Activated CD8-positive, alpha-beta T cell treated with anti-CD3 and anti-CD28 coated beads, Interleukin-2, amount 10 ng/mL, durations not matched to agents 7 days and 5 days (primary cell): ENCODE measurements at regions of chrX and their contacts with region 1.

Region 1: GRCh38 chrX:154373340-154374306 is 811 bp downstream of the FLNA start:
- DNase-seq: no peak
- ATAC-seq: no peak
- H3K4me3 Mint-ChIP-seq: peak overlapping the region; percentile 72
- H3K27ac Mint-ChIP-seq: peak overlapping the region; percentile 72
- H3K4me1 Mint-ChIP-seq: peaks cover 31% of the 10 kb centered on the region
- H3K27me3 Mint-ChIP-seq: no peaks in the 10 kb centered on the region

Region 2: DNA sequence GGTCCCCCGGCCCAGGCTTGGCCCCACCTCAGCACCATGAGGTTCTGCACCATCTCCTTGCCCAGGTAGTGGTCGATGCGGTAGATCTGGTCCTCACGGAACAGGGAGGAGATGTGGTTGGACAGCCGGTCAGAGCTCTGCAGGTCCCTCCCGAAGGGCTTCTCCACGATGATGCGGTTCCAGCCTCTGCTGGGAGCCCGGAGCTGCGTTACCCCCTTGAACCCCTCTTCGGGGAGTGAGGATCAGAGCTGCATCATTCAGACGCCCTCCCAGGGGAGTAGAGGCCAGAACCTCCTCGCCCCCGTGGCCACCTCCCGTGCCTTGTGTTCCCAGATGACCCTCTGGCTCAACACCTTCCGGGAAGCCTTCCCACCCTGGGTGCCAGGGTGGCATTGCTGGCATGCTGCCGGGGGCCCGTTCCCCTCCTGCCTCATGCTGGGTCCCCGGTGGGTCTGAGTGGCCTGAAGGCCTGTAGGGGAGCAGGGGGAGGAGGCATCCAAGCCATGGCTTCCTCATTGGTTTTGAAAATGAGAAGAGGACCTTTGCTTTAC is 160.8 kb after region 1 on chrX:
- CTCF ChIA-PET with region 1: interaction called, 10 read pairs
- POLR2A ChIA-PET with region 1: interaction called, 3 read pairs
- DNase-seq: no peak
- ATAC-seq: no peak
- H3K4me3 Mint-ChIP-seq: no peak overlapping the region
- H3K27ac Mint-ChIP-seq: no peak overlapping the region
- H3K4me1 Mint-ChIP-seq: peaks cover 13% of the 10 kb centered on the region
- H3K27me3 Mint-ChIP-seq: no peaks in the 10 kb centered on the region